Vagina (tissue), 2 donors: ENCODE measurements at regions of chr16 and their contacts with region 1.

Region 1: DNA sequence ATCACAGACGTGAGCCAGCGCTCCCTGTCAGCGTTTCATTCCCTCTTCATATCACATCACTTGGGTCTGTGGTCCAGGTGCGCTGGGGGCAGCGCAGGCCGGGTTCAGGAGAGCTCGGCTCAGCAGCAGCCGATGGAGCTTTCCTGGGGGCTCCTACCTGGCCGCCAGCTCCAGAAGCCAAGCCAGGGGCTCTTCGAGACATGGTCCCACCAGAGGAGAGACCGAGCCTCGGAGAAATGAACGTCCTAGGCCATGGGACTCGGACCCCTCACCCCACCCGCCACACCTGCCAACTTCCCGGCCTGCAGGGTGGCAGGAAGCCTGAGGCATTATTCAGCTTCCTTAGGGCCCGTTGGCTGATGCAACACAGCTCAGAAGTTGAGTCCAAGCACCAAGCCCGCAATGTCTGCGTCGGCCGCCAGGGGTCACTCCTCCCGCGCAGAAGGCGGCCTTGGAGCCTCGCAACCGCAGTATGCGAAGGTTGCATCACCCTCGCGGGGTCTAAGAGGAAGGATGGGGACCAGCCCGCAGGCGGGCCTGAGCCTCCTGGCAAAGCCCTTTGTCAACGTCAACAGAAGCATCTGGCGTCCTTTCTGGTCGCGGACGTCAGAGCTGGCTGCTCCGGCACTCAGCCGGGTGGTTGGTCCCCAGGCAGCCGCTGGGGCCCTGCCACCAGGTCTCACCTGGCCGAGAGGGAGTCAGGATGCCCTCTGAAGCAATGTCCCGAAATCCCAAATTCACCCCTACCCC is 13.2 kb upstream of the KLHDC4 start:
- DNase-seq: no peak
- H3K4me3 ChIP-seq: no peak overlapping the region
- H3K27ac ChIP-seq: no peak overlapping the region
- H3K4me1 ChIP-seq: peaks cover 22% of the 10 kb centered on the region
- H3K27me3 ChIP-seq: no peaks in the 10 kb centered on the region
- CTCF ChIP-seq: peak; percentile 95 to 99 (median 97)
- POLR2A ChIP-seq: no peak

Region 2: GRCh38 chr16:87744750-87745514 is 34.1 kb before region 1 on chr16:
- intact Hi-C with region 1: loop called (anchors 1 kb)
- DNase-seq: no peak
- H3K4me3 ChIP-seq: no peak overlapping the region
- H3K27ac ChIP-seq: no peak overlapping the region
- H3K4me1 ChIP-seq: no peaks in the 10 kb centered on the region
- H3K27me3 ChIP-seq: no peaks in the 10 kb centered on the region
- CTCF ChIP-seq: no peak
- POLR2A ChIP-seq: no peak

Region 3: GRCh38 chr16:87874639-87875465 is 95.8 kb after region 1 on chr16:
- intact Hi-C with region 1: loop called (anchors 2 kb)
- DNase-seq: no peak
- H3K4me3 ChIP-seq: no peak overlapping the region
- H3K27ac ChIP-seq: no peak overlapping the region
- H3K4me1 ChIP-seq: no peaks in the 10 kb centered on the region
- H3K27me3 ChIP-seq: no peaks in the 10 kb centered on the region
- CTCF ChIP-seq: no peak
- POLR2A ChIP-seq: no peak